Activated T-helper 2 cell treated with anti-CD3 and anti-CD28 coated beads, Interferon-gamma antibody, Interleukin-2, Interleukin-4, amounts not matched to agents 10 μg/mL and 5 μg/mL and 100 μg/mL, durations not matched to agents 14 hours and 24 hours and 36 hours (primary cell): ENCODE measurements at regions of chr9 and their contacts with region 1.

Region 1: DNA sequence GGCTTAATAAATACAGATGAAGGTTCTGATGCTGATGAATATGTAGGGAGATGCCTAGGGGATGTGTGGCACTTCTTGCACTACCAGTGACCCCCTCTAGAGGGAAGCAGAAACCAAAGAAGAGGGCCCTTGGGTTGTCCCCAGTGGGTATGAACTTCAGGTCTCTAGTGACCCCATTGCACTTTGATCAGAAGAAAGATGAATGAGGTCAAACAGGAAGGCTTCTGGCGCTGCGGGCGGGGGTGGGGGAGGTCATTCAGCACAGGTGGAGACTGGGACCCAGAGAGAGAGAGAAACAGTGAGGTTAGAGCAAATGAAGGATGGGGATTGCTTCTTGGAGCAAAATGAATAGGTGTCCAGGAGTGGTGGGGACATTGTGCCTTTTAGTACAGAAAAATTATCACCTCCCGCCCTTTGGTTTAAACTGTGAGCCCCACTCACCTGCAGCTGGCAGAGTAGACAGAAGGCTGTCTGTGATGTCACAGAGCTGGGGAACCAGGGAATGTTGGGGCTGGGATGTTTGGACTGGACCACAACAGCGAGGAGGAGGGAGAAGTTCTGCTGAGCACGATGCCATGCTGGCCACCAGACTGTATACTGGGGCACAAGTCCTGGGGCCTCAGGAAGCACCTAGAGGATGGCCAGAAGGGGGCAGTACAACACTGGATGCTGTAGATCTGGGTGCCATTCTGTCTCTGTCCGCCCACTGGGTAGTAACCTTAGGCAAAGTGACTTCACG is at the start of gene TEX48:
- DNase-seq: peak; percentile 74
- H3K4me3 Mint-ChIP-seq: no peak within 1 kb of the TSS
- H3K27ac Mint-ChIP-seq: peak within 1 kb of the TSS; percentile 94
- H3K4me1 Mint-ChIP-seq: peaks cover 67% of the 10 kb centered on the region
- H3K27me3 Mint-ChIP-seq: peaks cover 5% of the 10 kb centered on the region
- total RNA-seq, gene TEX48: 0.41 and 0.68 TPM in 2 replicates

Region 2: GRCh38 chr9:114606597-114607207 is 75.1 kb before region 1 on chr9:
- intact Hi-C with region 1: no loop called
- DNase-seq: no peak
- H3K4me3 Mint-ChIP-seq: no peak overlapping the region
- H3K27ac Mint-ChIP-seq: no peak overlapping the region
- H3K4me1 Mint-ChIP-seq: peaks cover 13% of the 10 kb centered on the region
- H3K27me3 Mint-ChIP-seq: no peaks in the 10 kb centered on the region

Region 3: DNA sequence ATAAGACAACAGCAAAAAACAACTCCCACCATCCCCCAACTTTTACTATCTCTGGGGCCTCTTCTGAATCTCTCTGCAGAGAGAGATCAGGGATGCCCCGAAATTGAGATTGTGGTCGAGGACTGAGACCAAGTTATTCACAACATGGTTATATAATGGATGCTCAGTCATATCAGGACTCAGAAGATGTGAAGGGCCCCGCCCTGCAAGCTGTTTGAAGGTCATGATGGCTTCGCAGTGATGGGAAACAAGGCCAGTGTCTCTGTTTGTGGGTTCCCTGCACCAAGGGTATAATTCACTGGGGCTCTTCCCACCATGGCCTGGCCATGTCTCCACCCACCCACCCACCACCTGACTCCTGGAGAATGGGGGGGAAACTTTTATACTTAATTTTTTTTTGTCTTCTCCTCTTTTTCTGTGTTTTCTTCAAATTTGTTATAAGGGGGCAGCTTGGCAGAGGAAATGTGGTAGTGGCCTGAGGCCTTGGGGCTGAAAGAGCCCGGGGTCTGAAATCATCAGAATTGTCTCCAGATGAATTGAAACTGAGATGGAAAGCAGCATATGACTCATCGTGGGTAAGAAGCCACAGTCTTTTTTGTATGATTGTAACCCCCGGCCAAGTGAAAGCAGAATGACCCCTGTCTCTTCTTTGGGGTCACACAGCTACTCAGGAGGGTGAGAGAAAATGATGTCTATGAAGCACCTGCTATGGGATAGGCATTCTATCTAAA is 15.2 kb after region 1 on chr9:
- intact Hi-C with region 1: loop called (anchors 1 kb)
- DNase-seq: peak; percentile 75
- H3K4me3 Mint-ChIP-seq: peak overlapping the region; percentile 52
- H3K27ac Mint-ChIP-seq: peak overlapping the region; percentile 96
- H3K4me1 Mint-ChIP-seq: peaks cover 87% of the 10 kb centered on the region
- H3K27me3 Mint-ChIP-seq: no peaks in the 10 kb centered on the region

Region 4: GRCh38 chr9:114738581-114739316 is 57.0 kb after region 1 on chr9:
- intact Hi-C with region 1: loop called (anchors 1 kb)
- DNase-seq: peak; percentile 62
- H3K4me3 Mint-ChIP-seq: no peak overlapping the region
- H3K27ac Mint-ChIP-seq: peak overlapping the region; percentile 83
- H3K4me1 Mint-ChIP-seq: peaks cover 50% of the 10 kb centered on the region
- H3K27me3 Mint-ChIP-seq: no peaks in the 10 kb centered on the region

Region 5: GRCh38 chr9:114906908-114907571 is 225.3 kb after region 1 on chr9:
- intact Hi-C with region 1: loop called (anchors 1 kb)
- DNase-seq: no peak
- H3K4me3 Mint-ChIP-seq: no peak overlapping the region
- H3K27ac Mint-ChIP-seq: peak overlapping the region; percentile 94
- H3K4me1 Mint-ChIP-seq: peaks cover 84% of the 10 kb centered on the region
- H3K27me3 Mint-ChIP-seq: no peaks in the 10 kb centered on the region

Region 6: GRCh38 chr9:115013998-115014397 is 332.2 kb after region 1 on chr9:
- intact Hi-C with region 1: loop called (anchors 1 kb)
- DNase-seq: peak; percentile 67
- H3K4me3 Mint-ChIP-seq: no peak overlapping the region
- H3K27ac Mint-ChIP-seq: no peak overlapping the region
- H3K4me1 Mint-ChIP-seq: peaks cover 45% of the 10 kb centered on the region
- H3K27me3 Mint-ChIP-seq: peaks cover 12% of the 10 kb centered on the region

Region 7: DNA sequence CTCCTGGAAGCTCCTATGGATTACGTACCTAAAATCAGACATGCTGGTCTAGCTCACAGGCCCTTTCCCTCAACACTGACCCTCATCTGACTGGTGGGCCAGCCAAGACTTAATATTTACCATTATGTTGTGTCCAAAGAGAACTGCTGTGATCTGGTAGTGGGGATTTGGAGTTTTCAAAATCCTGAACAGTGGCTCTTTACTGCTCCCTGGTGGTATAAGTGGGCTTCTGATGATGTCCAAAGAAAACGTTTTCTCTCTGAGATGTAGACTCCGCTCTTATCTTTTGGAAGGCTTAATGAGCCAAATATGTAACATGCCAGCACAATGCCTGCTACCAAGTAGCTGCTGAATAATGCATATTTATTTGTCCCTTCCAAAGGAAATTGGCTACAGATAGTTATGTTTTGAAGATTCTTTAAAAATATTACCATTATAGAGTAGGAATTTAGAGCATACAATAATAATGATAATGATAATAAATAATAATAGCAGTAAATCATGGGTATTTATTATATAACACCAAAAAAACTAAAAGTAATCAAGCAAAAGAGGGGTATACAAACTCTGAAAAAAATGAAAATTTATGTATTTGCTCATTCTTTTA is 842.8 kb after region 1 on chr9:
- intact Hi-C with region 1: loop called (anchors 5 kb)
- DNase-seq: no peak
- H3K4me3 Mint-ChIP-seq: no peak overlapping the region
- H3K27ac Mint-ChIP-seq: no peak overlapping the region
- H3K4me1 Mint-ChIP-seq: no peaks in the 10 kb centered on the region
- H3K27me3 Mint-ChIP-seq: no peaks in the 10 kb centered on the region